ENCODE measurements at regions of chr4 and their contacts with region 1.

Region 1: DNA sequence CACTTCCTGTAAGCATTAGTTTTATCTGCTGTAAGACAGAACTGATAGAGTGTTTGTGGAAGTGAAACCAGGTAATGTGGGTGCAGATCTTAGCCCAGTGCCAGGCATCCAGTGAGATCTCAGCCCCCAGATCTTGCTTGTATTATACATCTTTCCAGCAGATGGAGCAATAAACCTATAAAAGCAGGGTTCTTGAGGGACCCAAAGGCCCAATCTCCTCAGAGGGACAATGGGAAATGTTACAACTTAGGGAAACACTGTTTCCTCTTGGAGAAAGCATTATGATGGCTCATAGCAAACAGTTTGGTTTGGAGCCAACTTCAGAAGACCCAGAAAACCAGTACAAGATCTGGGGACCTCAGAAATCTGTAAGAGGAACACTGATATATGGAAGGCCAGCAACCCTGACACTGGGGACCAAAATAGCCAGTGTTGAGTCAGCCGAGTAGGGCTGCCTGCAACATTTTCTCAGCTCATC is 206.3 kb downstream of the SLC7A11 start:
- DNase-seq: peak; percentile 84
- ATAC-seq: peak; percentile 99
- H3K4me3 ChIP-seq: no peak overlapping the region
- H3K4me3 Mint-ChIP-seq: no peak overlapping the region
- H3K27ac ChIP-seq: peak overlapping the region in 1 of 2 donors; percentile 12
- H3K27ac Mint-ChIP-seq: peak overlapping the region; percentile 28
- H3K4me1 ChIP-seq: peaks cover 7 to 10% of the 10 kb centered on the region in 2 donors
- H3K4me1 Mint-ChIP-seq: peaks cover 10% of the 10 kb centered on the region
- H3K27me3 ChIP-seq: no peaks in the 10 kb centered on the region
- H3K27me3 Mint-ChIP-seq: no peaks in the 10 kb centered on the region
- CTCF ChIP-seq: peak; percentile 73

Region 2: GRCh38 chr4:138090150-138090917 is 54.5 kb after region 1 on chr4:
- CTCF ChIA-PET with region 1: interaction called, 33 read pairs
- POLR2A ChIA-PET with region 1: no interaction called
- intact Hi-C with region 1: loop called (anchors 1 kb)
- DNase-seq: peak; percentile 59
- ATAC-seq: peak; percentile 67
- H3K4me3 ChIP-seq: no peak overlapping the region
- H3K4me3 Mint-ChIP-seq: no peak overlapping the region
- H3K27ac ChIP-seq: no peak overlapping the region
- H3K27ac Mint-ChIP-seq: no peak overlapping the region
- H3K4me1 ChIP-seq: no peaks in the 10 kb centered on the region
- H3K4me1 Mint-ChIP-seq: no peaks in the 10 kb centered on the region
- H3K27me3 ChIP-seq: peaks cover 0 to 5% (median 0%) of the 10 kb centered on the region in 4 experiments
- H3K27me3 Mint-ChIP-seq: peaks cover 29% of the 10 kb centered on the region
- CTCF ChIP-seq: peak; percentile 90

Region 3: DNA sequence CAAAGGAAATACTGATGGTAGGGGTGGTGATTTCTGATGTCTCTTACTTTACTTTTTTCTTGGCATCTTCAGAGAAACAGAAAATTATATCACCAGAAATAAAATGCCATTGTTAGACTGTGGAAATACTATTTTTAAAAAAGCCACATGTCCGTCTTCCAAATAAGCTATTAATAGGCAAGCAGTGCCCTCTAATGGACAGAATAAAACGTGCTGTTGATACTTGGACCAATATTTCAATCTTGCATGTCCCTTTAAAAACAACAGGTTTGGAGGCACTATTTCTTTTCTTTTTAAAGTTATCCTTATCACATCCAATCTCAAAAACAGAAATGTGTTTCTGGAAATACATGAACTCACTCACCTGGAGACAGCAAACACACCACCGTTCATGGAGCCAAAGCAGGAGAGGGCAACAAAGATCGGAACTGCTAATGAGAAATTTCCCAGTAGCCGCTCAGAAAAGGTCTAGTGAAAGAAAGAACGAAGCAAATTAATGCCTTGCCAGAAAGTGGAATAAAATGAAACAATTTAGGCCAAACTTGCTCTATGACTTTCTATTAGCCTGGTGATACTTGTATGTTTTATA is 147.1 kb after region 1 on chr4:
- CTCF ChIA-PET with region 1: interaction called, 19 read pairs
- POLR2A ChIA-PET with region 1: no interaction called
- intact Hi-C with region 1: loop called (anchors 1 kb)
- DNase-seq: peak; percentile 65
- ATAC-seq: peak; percentile 24
- H3K4me3 ChIP-seq: no peak overlapping the region
- H3K4me3 Mint-ChIP-seq: no peak overlapping the region
- H3K27ac ChIP-seq: no peak overlapping the region
- H3K27ac Mint-ChIP-seq: no peak overlapping the region
- H3K4me1 ChIP-seq: no peaks in the 10 kb centered on the region
- H3K4me1 Mint-ChIP-seq: no peaks in the 10 kb centered on the region
- H3K27me3 ChIP-seq: no peaks in the 10 kb centered on the region
- H3K27me3 Mint-ChIP-seq: peaks cover 9% of the 10 kb centered on the region
- CTCF ChIP-seq: peak; percentile 84

Region 4: GRCh38 chr4:138680989-138681604 is 645.3 kb after region 1 on chr4:
- CTCF ChIA-PET with region 1: interaction called, 11 read pairs
- POLR2A ChIA-PET with region 1: no interaction called
- intact Hi-C with region 1: loop called (anchors 1 kb)
- DNase-seq: peak; percentile 68
- ATAC-seq: peak; percentile 58
- H3K4me3 ChIP-seq: no peak overlapping the region
- H3K4me3 Mint-ChIP-seq: no peak overlapping the region
- H3K27ac ChIP-seq: no peak overlapping the region
- H3K27ac Mint-ChIP-seq: no peak overlapping the region
- H3K4me1 ChIP-seq: no peaks in the 10 kb centered on the region
- H3K4me1 Mint-ChIP-seq: no peaks in the 10 kb centered on the region
- H3K27me3 ChIP-seq: peaks cover 0 to 6% (median 2%) of the 10 kb centered on the region in 4 experiments
- H3K27me3 Mint-ChIP-seq: peaks cover 12% of the 10 kb centered on the region
- CTCF ChIP-seq: peak; percentile 97

Region 5: DNA sequence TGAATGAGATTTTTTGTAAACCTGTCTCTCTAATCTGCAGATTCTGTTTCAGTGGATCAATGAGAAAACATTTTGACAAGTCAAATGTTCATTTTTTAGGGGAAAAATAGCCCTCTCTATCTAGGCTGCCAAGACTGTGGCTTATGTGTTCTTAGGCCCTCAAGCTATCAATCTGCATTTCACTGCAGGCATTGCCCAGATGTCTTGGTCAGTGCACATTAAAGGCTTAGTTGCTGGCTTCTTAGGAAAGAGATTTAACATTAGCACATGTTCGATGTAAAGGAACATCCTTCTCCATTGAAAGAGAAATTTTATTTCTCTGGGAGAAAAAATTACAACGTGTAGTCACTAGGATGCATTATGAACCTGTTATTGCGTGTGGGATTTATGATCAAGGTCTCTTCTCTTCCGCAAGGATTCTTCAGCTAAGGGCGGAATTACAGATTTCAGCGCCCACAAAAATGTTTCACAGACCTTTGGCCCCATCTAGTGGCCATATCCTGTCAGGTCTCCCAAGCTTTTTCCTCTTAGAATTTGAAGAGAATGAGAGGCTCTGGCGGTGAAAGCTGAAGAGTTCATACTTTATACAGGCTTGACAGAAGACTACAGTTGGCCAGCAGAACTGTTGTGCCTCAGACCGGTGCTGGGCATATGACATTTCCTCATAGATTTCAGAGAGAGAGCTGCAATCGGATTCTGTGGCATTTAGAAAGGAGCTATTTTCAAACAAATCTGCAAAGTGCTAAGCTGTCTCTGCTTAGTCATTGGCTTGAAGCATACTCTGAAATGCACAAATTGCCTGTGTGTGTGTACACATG is 835.1 kb after region 1 on chr4:
- CTCF ChIA-PET with region 1: interaction called, 6 read pairs
- POLR2A ChIA-PET with region 1: no interaction called
- intact Hi-C with region 1: loop called (anchors 5 kb)
- DNase-seq: peak; percentile 59
- ATAC-seq: peak; percentile 39
- H3K4me3 ChIP-seq: no peak overlapping the region
- H3K4me3 Mint-ChIP-seq: no peak overlapping the region
- H3K27ac ChIP-seq: no peak overlapping the region
- H3K27ac Mint-ChIP-seq: no peak overlapping the region
- H3K4me1 ChIP-seq: peaks cover 0 to 6% of the 10 kb centered on the region in 2 donors
- H3K4me1 Mint-ChIP-seq: no peaks in the 10 kb centered on the region
- H3K27me3 ChIP-seq: peaks cover 0 to 12% (median 3%) of the 10 kb centered on the region in 4 experiments
- H3K27me3 Mint-ChIP-seq: peaks cover 21% of the 10 kb centered on the region
- CTCF ChIP-seq: peak; percentile 89